ENCODE measurements at regions of chr4 and their contacts with region 1.

Region 1: DNA sequence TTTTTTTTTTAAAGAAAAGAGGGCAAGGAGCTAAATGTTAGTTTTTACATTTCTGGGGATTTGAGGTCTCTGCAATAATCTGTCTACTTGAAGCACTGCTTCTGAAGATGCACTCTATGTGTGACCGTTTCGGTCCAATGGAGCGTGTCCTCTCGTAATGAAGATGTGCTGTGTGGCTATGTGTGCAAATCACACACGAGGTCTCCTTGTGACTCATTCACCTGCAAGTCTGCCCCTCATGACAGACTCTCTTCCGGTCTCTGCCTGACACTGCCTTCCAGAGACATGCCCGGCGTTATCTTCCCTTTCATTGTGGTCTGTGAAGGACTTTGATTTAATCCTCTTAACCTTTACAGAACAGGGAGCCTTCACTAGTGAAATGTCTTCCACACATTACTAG is 84.3 kb downstream of the TRAM1L1 start:
- DNase-seq: no peak
- H3K4me3 ChIP-seq: no peak overlapping the region
- H3K4me3 Mint-ChIP-seq: no peak overlapping the region
- H3K27ac ChIP-seq: no peak overlapping the region
- H3K27ac Mint-ChIP-seq: no peak overlapping the region
- H3K4me1 ChIP-seq: no peaks in the 10 kb centered on the region
- H3K4me1 Mint-ChIP-seq: no peaks in the 10 kb centered on the region
- H3K27me3 ChIP-seq: no peaks in the 10 kb centered on the region
- H3K27me3 Mint-ChIP-seq: no peaks in the 10 kb centered on the region

Region 2: DNA sequence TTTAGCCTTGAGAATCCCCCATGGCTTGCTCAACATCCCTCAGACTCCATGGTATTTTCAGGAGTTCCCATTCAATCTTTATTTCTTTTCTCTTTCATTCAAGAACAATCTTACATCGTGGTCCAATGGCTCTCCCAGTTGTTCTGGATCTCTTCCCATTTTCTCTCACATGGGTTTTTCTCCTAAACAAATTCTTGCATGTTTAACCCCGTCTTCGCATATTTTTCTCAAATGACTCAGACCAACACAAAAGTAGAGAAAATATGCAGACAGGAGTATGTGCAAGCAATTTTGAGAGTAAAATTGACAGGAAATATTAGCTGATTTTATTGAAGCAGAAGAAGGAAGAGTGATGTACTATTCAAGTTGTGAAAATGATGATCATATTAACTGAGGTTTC is 480.7 kb after region 1 on chr4:
- CTCF ChIA-PET with region 1: no interaction called
- POLR2A ChIA-PET with region 1: interaction called, 10 read pairs
- DNase-seq: no peak
- H3K4me3 ChIP-seq: no peak overlapping the region
- H3K4me3 Mint-ChIP-seq: no peak overlapping the region
- H3K27ac ChIP-seq: no peak overlapping the region
- H3K27ac Mint-ChIP-seq: no peak overlapping the region
- H3K4me1 ChIP-seq: no peaks in the 10 kb centered on the region
- H3K4me1 Mint-ChIP-seq: no peaks in the 10 kb centered on the region
- H3K27me3 ChIP-seq: no peaks in the 10 kb centered on the region
- H3K27me3 Mint-ChIP-seq: no peaks in the 10 kb centered on the region